ENCODE measurements at regions of chr7 and their contacts with region 1.

Region 1: DNA sequence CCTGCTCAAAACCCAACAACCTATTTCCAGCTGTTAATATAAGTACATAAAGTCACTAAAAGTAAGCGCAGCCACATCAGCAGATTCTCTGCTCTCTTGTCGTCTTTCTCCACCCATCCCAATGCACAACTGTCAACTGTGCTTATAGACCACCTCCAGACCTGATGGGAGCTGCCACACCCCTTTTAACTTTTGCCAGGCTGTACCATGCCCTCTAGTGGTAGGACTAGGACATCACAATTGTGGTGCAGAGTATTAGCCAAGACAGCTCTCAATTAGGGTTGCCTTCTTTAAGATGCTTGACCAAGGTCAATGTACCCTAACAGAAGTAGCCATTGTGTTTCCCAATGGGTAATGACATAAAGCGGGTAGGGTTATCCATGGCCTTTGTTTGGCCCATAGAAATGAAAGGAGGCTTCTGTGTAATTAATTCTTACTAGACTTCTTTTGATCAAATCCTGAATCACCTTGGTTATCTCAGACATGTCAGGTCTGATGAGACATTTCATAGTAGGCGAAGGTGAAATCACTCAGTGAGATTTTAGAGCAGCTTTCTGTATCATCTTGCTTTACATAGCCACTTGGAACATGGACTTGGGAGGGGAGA is 68.1 kb downstream of the SCRN1 start:
- DNase-seq: no peak
- H3K4me3 ChIP-seq: no peak overlapping the region
- H3K27ac ChIP-seq: no peak overlapping the region
- H3K4me1 ChIP-seq: no peaks in the 10 kb centered on the region
- H3K27me3 ChIP-seq: no peaks in the 10 kb centered on the region
- CTCF ChIP-seq: peak; percentile 43 to 90 (median 80)
- POLR2A ChIP-seq: no peak

Region 2: DNA sequence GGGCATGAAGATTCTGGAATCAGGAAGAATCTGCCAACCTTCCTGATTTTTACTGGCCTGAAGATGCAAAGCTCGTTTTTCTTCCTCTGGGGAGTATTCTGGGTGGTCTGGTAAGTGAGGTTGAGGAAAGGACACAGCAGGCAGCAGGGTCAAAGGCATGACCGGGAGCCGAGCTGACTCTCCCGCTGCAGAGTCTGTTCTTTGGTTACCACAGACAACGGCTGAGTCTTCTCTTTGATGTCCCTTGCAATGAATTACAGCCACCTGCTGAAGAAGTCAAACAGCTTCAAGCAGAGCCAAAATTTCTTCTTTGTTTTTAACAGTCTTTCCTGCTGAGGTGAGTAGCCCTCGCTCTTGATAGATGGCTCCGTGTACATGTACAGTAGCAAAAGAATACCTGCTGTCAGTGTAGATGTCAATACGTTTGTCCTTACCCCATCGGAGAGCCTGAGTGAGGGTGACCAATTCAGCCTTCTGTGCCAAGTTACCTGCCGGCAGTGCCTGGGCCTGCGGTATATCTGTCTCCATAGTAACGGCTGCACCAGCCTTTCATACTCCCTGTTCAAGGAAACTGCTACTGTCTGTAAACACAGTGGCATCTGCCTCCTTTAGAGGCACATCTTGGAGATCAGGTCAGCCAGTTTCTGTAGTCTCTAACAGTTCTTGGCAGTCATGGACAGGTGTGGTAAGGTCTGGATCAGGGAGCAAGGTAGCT is 281.5 kb before region 1 on chr7:
- intact Hi-C with region 1: loop called (anchors 10 kb)
- DNase-seq: no peak
- H3K4me3 ChIP-seq: no peak overlapping the region
- H3K27ac ChIP-seq: no peak overlapping the region
- H3K4me1 ChIP-seq: peaks cover 0 to 5% (median 0%) of the 10 kb centered on the region in 3 donors
- H3K27me3 ChIP-seq: no peaks in the 10 kb centered on the region
- CTCF ChIP-seq: no peak
- POLR2A ChIP-seq: no peak

Region 3: GRCh38 chr7:29734246-29734731 is 187.2 kb before region 1 on chr7:
- intact Hi-C with region 1: no loop called
- DNase-seq: no peak
- H3K4me3 ChIP-seq: no peak overlapping the region
- H3K27ac ChIP-seq: no peak overlapping the region
- H3K4me1 ChIP-seq: no peaks in the 10 kb centered on the region
- H3K27me3 ChIP-seq: peaks cover 0 to 5% (median 0%) of the 10 kb centered on the region in 4 donors
- CTCF ChIP-seq: no peak
- POLR2A ChIP-seq: no peak

Region 4: DNA sequence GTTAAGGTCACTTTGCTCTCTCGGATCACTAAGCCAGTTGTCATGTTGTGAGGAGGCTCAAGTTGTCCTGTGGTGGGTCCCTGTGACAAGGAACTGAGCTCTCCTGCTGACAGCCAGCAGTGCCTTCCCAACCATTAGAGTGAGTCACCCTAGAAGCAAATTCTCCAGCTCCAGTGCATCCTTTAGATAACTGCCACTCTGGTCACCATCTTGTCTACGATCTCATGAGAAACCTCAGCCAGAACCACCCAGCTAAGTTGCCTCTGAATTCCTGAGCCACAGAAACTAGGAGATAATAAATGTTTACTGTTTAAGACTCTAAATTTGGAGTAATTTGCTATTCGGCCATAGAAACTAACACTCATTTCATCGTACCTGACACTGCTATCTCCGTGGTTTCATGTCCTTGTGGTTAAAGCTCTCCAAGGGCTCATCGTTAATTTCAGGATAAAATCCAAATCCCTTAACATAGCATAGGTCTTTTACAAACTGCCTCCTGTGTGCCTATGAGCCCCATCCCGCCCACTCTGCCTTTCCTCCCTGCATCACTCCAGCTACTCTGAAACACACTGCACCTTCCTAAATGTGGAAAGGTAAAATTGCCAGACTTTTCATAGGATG is 171.7 kb before region 1 on chr7:
- intact Hi-C with region 1: loop called (anchors 10 kb)
- DNase-seq: no peak
- H3K4me3 ChIP-seq: no peak overlapping the region
- H3K27ac ChIP-seq: no peak overlapping the region
- H3K4me1 ChIP-seq: peaks cover 0 to 5% (median 0%) of the 10 kb centered on the region in 3 donors
- H3K27me3 ChIP-seq: no peaks in the 10 kb centered on the region
- CTCF ChIP-seq: no peak
- POLR2A ChIP-seq: no peak